ENCODE measurements at regions of chr13 and their contacts with region 1.

Region 1: DNA sequence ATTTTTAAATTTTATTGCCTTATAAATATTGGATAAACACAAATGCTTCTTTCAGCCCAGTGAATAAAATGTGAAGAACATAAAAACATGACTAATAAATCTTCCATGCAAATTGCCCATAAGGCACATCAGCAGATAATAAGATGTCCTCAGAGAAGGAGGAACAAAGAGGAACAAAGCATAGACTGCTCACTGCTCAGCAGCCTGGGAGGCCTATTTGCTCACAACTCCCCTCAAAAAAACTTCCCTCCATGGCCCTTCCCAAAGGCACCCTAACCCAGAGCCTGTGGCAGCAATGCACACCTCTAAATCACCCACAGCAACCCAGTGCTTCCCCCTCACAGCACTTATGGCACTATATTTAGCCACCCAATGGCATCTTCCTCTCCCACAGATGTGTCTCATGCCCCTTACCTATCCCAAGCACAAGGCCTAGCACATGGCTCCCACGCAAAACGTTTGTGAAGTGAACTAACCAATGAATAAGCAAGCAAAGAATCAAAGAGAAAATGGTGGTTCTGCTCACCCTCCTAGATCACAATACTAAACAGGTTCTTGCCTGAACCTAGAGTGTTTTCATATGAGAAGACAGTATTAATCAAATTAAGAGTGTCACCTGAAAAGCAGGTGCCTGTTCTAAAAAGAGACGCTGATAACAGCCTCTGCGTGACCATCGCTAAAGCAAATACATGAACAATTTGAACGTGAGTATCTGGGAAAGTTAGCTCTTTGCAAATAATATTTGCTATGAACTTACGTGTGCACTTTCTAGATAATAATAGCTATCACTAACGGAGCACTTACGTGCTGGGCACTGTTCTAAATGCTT is 96.9 kb downstream of the TBC1D4 start:
- DNase-seq: peak; percentile 70 to 77
- H3K4me3 ChIP-seq: peak overlapping the region; percentile 6
- H3K4me3 Mint-ChIP-seq: peak overlapping the region; percentile 67
- H3K27ac Mint-ChIP-seq: peak overlapping the region; percentile 93
- H3K4me1 ChIP-seq: peaks cover 76% of the 10 kb centered on the region
- H3K4me1 Mint-ChIP-seq: peaks cover 44% of the 10 kb centered on the region
- H3K27me3 ChIP-seq: no peaks in the 10 kb centered on the region
- H3K27me3 Mint-ChIP-seq: no peaks in the 10 kb centered on the region
- CTCF ChIP-seq: no peak

Region 2: GRCh38 chr13:75365724-75366173 is 19.3 kb before region 1 on chr13:
- CTCF ChIA-PET with region 1: interaction called, 3 read pairs
- POLR2A ChIA-PET with region 1: interaction called, 3 read pairs
- intact Hi-C with region 1: loop called (anchors 2 kb)
- DNase-seq: no peak
- H3K4me3 ChIP-seq: no peak overlapping the region
- H3K4me3 Mint-ChIP-seq: no peak overlapping the region
- H3K27ac Mint-ChIP-seq: peak overlapping the region; percentile 26
- H3K4me1 ChIP-seq: peaks cover 84% of the 10 kb centered on the region
- H3K4me1 Mint-ChIP-seq: peaks cover 57% of the 10 kb centered on the region
- H3K27me3 ChIP-seq: no peaks in the 10 kb centered on the region; the same call in 1 of the 2 replicates
- H3K27me3 Mint-ChIP-seq: no peaks in the 10 kb centered on the region
- CTCF ChIP-seq: no peak

Region 3: DNA sequence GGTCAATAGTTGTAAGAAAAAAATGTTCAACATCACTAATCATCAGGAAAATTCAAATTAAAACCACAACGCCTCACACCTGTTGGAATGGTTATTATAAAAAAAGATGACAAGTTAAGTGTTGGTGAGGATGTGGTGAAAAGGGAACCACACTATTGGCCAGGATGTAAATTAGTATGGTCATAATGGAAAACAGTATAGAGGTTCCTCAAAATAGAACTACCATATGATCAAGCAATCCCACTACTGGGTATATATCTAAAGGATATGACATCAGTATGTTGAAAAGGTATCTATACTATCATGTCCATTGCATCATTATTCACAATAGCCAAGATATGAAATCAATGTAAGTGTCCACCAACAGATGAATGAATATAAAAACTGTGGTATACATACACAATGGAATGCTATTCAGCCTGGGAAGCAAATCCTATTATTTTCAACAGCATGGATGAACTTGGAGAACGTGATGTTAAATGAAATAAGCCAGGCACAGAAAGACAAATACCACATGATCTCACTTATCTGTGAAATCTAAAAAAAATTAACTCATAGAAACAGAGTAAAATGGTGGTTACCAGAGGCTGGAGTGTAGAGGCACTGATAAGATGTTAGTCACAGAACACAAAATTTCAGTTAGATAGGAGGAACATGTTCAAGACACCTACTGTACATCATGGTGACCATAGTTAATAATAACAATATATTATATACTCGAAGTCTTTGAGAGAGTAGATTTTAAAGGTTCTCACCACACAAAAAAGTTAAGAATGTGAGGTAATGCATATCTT is 40.3 kb after region 1 on chr13:
- CTCF ChIA-PET with region 1: no interaction called
- POLR2A ChIA-PET with region 1: no interaction called
- intact Hi-C with region 1: no loop called
- DNase-seq: no peak
- H3K4me3 ChIP-seq: no peak overlapping the region
- H3K4me3 Mint-ChIP-seq: no peak overlapping the region
- H3K27ac Mint-ChIP-seq: no peak overlapping the region
- H3K4me1 ChIP-seq: peaks cover 14% of the 10 kb centered on the region
- H3K4me1 Mint-ChIP-seq: peaks cover 18% of the 10 kb centered on the region
- H3K27me3 ChIP-seq: no peaks in the 10 kb centered on the region
- H3K27me3 Mint-ChIP-seq: no peaks in the 10 kb centered on the region
- CTCF ChIP-seq: no peak

Region 4: DNA sequence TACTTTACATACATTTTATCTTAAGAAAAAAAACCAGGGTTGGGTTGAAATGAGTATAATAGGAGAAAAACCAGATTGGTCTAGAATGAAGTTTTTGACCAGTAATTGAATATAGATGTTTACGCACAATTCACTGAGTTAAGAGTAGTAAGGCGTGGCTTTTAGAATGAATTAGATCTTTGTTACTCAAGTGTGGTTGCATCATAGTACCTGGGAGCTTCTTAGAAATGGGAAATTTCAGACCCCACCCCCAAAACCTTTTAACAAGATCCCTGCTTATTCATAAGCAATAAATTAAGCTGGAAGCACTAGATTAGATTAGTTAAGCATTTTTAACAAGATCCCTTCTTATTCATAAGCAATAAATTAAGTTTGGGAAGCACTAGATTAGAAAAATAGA is 222.4 kb after region 1 on chr13:
- CTCF ChIA-PET with region 1: no interaction called
- POLR2A ChIA-PET with region 1: no interaction called
- intact Hi-C with region 1: no loop called
- DNase-seq: no peak
- H3K4me3 ChIP-seq: no peak overlapping the region
- H3K4me3 Mint-ChIP-seq: no peak overlapping the region
- H3K27ac Mint-ChIP-seq: no peak overlapping the region
- H3K4me1 ChIP-seq: peaks cover 12% of the 10 kb centered on the region
- H3K4me1 Mint-ChIP-seq: peaks cover 22% of the 10 kb centered on the region
- H3K27me3 ChIP-seq: no peaks in the 10 kb centered on the region
- H3K27me3 Mint-ChIP-seq: no peaks in the 10 kb centered on the region
- CTCF ChIP-seq: no peak

Measured in Caco-2 (cell line).